ENCODE measurements at regions of chr11 and their contacts with region 1.

Region 1: GRCh38 chr11:44556735-44557409 is 8.6 kb upstream of the CD82 start:
- DNase-seq: no peak

Region 2: GRCh38 chr11:44615913-44616791 is 59.3 kb after region 1 on chr11:
- intact Hi-C with region 1: loop called (anchors 1 kb)
- DNase-seq: peak; percentile 50